Activated CD4-positive, alpha-beta memory T cell treated with anti-CD3 and anti-CD28 coated beads for 36 hours (primary cell): ENCODE measurements at regions of chr5 and their contacts with region 1.

Region 1: DNA sequence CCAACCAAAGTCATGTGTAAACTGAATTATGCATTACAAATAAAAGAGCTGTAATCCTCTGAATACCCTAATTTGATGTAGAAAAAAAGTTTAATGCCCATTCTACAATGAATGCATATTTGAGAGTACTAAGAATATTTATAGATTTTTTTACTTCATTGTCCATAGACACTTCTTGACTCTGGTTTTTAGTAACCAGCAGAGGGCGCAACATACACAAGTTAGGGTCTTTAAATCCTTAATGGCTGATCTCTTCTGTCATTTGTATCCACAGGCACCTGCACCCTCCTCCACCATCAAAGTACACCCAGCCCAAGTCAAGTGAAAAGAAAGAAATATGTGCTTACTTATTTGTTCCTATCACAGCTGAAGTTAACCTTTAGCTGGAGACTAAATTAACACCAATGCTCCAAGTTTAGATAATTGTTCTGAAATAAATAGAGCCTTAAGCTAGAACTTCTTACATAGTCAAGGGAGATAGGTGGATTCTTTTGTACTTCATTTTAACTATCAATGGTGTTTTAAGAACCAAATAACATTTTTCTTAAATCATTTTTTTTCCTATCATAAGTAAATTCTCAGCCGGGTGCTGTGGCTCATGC is 524.2 kb upstream of the DAB2 start:
- DNase-seq: peak; percentile 54
- H3K4me3 Mint-ChIP-seq: no peak overlapping the region
- H3K27ac Mint-ChIP-seq: peak overlapping the region; percentile 4
- H3K4me1 Mint-ChIP-seq: peaks cover 3% of the 10 kb centered on the region
- H3K27me3 Mint-ChIP-seq: no peaks in the 10 kb centered on the region

Region 2: GRCh38 chr5:39570403-39571027 is 378.5 kb before region 1 on chr5:
- CTCF ChIA-PET with region 1: no interaction called
- POLR2A ChIA-PET with region 1: no interaction called
- intact Hi-C with region 1: loop called (anchors 10 kb)
- DNase-seq: no peak
- H3K4me3 Mint-ChIP-seq: no peak overlapping the region
- H3K27ac Mint-ChIP-seq: no peak overlapping the region
- H3K4me1 Mint-ChIP-seq: no peaks in the 10 kb centered on the region
- H3K27me3 Mint-ChIP-seq: peaks cover 2% of the 10 kb centered on the region

Region 3: DNA sequence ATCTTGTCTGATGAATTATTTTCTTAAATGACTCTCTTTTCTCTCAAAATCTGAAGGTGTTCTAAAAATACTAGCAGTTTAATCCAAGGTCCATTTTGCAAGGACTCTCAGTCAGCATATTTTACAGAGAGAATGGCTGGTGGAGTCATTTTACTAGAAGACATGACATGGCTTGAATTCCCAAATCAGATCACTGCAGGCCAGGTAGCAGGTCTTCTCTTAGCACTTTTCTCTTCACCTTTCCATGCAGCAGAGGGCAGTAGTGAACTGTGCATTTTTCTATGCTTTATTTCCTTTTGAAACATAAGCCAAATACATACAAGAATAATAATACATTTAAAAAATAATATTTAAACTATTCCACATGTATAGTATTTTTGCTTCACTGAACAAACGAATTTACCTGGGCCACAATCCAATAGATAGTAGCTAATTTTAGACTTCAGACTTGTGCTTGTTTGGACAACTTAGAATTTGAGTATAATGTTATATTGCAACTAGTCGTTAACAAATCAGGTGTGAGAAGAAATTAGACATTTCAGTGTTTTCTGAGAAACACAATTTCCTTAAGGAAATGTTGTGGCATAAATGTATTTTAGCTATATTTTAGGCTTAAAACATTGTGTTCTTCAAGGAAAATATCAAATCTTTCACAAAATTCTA is 234.8 kb before region 1 on chr5:
- CTCF ChIA-PET with region 1: interaction called, 7 read pairs
- POLR2A ChIA-PET with region 1: no interaction called
- intact Hi-C with region 1: loop called (anchors 5 kb)
- DNase-seq: peak; percentile 29
- H3K4me3 Mint-ChIP-seq: no peak overlapping the region
- H3K27ac Mint-ChIP-seq: no peak overlapping the region
- H3K4me1 Mint-ChIP-seq: no peaks in the 10 kb centered on the region
- H3K27me3 Mint-ChIP-seq: no peaks in the 10 kb centered on the region

Region 4: DNA sequence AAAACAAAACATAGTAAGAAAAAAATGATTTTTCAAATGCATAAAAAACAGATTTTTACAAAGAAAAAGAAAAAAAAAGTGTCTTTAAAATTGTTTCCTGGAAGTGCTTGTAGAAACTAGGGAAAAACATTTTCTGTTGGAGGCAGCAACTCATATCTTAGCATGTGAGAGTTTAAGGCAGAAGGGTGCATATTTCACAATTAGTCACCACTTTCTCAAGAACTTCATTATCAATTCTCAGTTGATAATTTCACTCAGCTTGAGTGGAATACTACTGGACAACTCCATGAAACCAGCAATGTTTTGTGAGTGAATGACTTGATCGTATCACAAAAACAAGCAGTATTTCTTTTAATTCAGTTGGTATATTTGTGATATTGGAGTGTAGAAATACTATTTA is 15.9 kb before region 1 on chr5:
- CTCF ChIA-PET with region 1: interaction called, 13 read pairs
- POLR2A ChIA-PET with region 1: no interaction called
- intact Hi-C with region 1: no loop called
- DNase-seq: no peak
- H3K4me3 Mint-ChIP-seq: no peak overlapping the region
- H3K27ac Mint-ChIP-seq: no peak overlapping the region
- H3K4me1 Mint-ChIP-seq: no peaks in the 10 kb centered on the region
- H3K27me3 Mint-ChIP-seq: peaks cover 16% of the 10 kb centered on the region

Region 5: DNA sequence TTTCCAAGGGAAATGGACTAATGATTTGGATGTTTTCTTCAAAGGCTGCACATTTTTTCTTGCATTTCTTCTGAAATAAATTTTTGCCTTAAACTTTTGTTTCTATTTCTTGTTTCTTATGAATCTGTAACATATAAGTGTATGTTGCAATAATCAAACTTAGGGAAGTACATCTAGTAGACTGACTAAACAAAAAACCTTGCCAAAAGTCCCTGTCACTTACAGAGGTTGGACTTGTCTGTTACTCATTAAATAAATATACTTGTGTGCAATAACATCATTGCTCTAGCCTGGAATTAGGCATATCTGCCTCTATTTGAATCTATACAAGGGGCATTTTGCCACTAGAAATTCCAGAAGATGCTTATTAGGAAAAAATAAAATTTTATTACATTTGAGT is 1207.8 kb after region 1 on chr5:
- CTCF ChIA-PET with region 1: no interaction called
- POLR2A ChIA-PET with region 1: no interaction called
- intact Hi-C with region 1: no loop called
- DNase-seq: no peak
- H3K4me3 Mint-ChIP-seq: no peak overlapping the region
- H3K27ac Mint-ChIP-seq: no peak overlapping the region
- H3K4me1 Mint-ChIP-seq: no peaks in the 10 kb centered on the region
- H3K27me3 Mint-ChIP-seq: no peaks in the 10 kb centered on the region